Heart right ventricle (tissue), 16 donors: ENCODE measurements at regions of chr22 and their contacts with region 1.

Region 1: DNA sequence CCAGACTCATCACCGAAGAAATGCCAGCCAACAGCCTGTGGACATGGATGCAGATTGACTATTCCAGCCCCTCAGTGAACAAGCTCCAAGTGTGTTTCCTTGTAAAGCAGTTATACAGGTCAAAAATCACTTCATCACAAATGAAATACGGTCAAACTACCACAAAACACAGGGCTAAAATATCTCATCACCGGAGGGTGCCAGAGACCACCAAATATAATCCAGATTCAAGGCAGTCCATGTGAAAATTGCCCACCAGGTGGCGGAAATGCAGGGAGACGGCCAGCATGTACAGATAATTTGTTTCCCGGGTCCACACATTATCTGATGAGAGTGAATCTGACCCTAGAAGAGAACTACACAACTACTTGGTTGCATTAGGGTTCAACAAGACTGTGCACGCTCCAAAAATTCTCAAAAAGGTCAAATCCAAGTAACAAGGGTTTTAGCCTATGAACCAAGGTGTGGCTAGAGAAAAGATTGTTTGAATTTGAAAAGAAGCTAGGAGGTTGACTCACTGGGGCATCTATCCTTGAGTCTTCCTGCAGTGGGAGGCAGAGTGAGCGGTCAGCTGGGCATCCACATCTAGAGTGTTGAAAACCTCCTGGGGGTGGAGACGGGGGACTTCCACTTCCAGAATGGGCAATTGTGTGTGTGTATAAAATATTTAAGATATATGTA is 71.7 kb downstream of the IGLL5 start:
- DNase-seq: peak; percentile 45 to 81
- ATAC-seq: peak; percentile 52 to 87 (median 77)
- H3K4me3 ChIP-seq: no peak overlapping the region
- H3K27ac ChIP-seq: peak overlapping the region in 7 of 10 donors; percentile 54 to 77 (median 73)
- H3K4me1 ChIP-seq: peaks cover 0 to 21% (median 6%) of the 10 kb centered on the region in 9 donors
- H3K27me3 ChIP-seq: peaks cover 0 to 24% (median 15%) of the 10 kb centered on the region in 7 donors
- CTCF ChIP-seq: peak; percentile 86 to 99 (median 93)

Region 2: DNA sequence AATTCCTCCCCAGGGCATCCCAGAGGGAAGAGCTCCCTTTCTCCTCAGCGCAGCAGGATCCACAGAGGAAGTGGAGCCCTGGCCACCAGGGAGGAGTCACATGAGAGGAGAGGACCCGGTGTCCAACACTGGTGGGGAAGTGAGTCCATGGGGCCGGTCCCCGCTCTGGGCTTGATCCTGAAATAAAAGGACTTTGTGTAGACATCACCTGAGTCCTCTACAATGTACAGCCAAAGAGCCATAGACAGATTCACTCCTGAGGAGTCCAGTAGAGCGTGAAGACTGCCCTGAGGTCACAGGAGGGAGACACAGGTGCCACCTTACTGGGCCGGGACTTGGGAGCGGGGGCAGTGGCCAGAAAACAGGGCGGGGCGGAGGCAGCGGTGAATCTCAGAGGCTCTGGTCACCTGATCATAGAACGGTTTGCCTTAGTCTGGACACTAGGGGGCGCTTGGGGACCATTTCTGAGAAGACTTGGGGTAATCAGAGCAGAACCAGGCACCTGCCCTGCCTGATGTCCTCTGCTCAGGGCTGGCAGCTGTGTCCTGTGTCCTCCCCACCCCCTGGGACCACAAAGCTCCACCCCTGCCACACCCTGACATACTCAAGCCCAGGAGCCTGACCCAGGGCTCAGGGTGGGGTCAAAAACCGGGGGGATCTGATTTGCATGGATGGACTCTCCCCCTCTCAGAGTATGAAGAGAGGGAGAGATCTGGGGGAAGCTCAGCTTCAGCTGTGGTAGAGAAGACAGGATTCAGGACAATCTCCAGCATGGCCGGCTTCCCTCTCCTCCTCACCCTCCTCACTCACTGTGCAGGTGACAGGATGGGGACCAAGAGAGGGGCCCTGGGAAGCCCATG is 602.0 kb before region 1 on chr22:
- intact Hi-C with region 1: loop called in 1 of 10 experiments (anchors 10 kb)
- DNase-seq: peak; percentile 57 to 74
- ATAC-seq: peak; percentile 67 to 94 (median 82)
- H3K4me3 ChIP-seq: no peak overlapping the region
- H3K27ac ChIP-seq: no peak overlapping the region
- H3K4me1 ChIP-seq: no peaks in the 10 kb centered on the region
- H3K27me3 ChIP-seq: peaks cover 0 to 63% (median 37%) of the 10 kb centered on the region in 7 donors
- CTCF ChIP-seq: peak; percentile 31 to 71 (median 63)

Region 3: DNA sequence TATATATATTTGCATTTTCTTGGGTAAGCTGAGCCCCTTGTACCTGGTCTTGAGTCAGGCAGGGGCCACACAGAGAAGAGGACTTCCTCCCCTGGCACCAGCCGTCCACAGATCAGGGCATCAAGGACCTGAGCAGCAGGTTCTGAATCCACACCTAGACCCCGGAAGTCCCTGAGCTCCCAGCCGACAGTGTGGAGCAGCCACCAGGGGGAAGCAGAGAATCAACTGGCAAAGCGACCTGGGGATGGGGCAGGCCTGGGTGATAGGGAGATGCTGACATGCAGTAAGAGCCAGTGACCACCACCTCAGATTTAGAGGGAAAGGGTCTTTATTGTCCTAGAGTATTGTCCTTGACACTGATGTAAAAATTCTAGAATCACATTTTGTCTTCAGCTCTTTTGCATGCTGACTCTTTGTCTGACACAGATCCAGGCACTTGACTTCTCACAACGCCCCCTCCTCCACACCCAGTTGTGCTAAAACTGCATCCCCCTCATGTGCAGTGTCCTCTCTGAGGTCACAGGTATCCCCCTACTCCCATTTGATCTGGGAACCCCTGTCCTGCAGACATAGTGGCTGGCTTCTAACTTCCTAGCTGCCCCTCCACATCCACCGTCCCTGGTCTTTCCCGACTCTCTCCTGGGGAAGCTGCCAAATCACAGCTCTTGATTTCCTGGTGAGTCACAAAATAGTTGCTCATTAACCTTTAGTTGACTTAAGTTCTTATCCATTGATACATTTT is 205.6 kb before region 1 on chr22:
- intact Hi-C with region 1: loop called in 1 of 10 experiments (anchors 10 kb)
- DNase-seq: peak in 1 of 2 donors; percentile 31
- ATAC-seq: peak in 6 of 8 donors; percentile 36 to 51 (median 42)
- H3K4me3 ChIP-seq: no peak overlapping the region
- H3K27ac ChIP-seq: peak overlapping the region in 1 of 10 donors; percentile 68
- H3K4me1 ChIP-seq: peaks cover 0 to 23% (median 0%) of the 10 kb centered on the region in 9 donors
- H3K27me3 ChIP-seq: peaks cover 0 to 28% (median 3%) of the 10 kb centered on the region in 7 donors
- CTCF ChIP-seq: peak in 7 of 9 donors; percentile 49 to 77 (median 53)

Region 4: DNA sequence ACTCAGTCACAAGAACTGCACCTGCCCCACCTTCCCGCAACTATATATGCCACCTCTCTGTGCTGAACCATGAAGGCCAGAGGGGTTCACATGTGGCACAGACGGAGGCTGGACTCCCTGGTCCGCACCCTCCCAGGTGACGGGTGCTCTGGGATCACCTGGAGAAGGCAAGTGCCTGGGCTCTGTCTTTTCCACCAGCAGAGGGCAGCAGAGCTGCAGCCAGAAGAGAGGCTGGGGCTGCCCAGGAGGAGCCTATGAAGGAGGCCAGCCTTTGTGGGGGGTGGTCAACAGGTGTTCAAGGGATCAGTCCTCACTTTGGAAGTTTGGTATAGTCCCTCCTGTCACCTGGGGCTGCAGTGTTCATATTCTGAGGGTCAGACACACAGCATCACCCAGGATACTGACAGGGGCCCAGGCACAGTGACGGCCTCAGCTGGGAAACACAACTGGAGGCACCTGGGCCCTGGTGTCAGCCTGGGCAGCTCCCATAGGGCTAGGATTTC is 110.9 kb before region 1 on chr22:
- intact Hi-C with region 1: loop called in 7 of 10 experiments (anchors 2 to 10 kb)
- DNase-seq: peak; percentile 41 to 51
- ATAC-seq: peak in 7 of 8 donors; percentile 61 to 79 (median 65)
- H3K4me3 ChIP-seq: no peak overlapping the region
- H3K27ac ChIP-seq: no peak overlapping the region
- H3K4me1 ChIP-seq: no peaks in the 10 kb centered on the region
- H3K27me3 ChIP-seq: peaks cover 0 to 28% (median 22%) of the 10 kb centered on the region in 7 donors
- CTCF ChIP-seq: peak; percentile 70 to 96 (median 86)

Region 5: GRCh38 chr22:23069502-23070357 is 110.4 kb after region 1 on chr22:
- intact Hi-C with region 1: loop called in 1 of 10 experiments (anchors 5 kb)
- DNase-seq: peak; percentile 91 to 95
- ATAC-seq: peak; percentile 94 to 98 (median 96)
- H3K4me3 ChIP-seq: peak overlapping the region in 9 of 10 donors; percentile 37 to 85 (median 63)
- H3K27ac ChIP-seq: peak overlapping the region in 4 of 10 donors; percentile 15 to 59 (median 53)
- H3K4me1 ChIP-seq: peaks cover 0 to 42% (median 20%) of the 10 kb centered on the region in 9 donors
- H3K27me3 ChIP-seq: peaks cover 0 to 36% (median 0%) of the 10 kb centered on the region in 7 donors
- CTCF ChIP-seq: no peak

Region 6: GRCh38 chr22:23289851-23290724 is 330.8 kb after region 1 on chr22:
- intact Hi-C with region 1: loop called in 6 of 10 experiments (anchors 5 to 10 kb)
- DNase-seq: peak; percentile 35 to 62
- ATAC-seq: peak; percentile 27 to 73 (median 54)
- H3K4me3 ChIP-seq: no peak overlapping the region
- H3K27ac ChIP-seq: no peak overlapping the region
- H3K4me1 ChIP-seq: peaks cover 0 to 13% (median 5%) of the 10 kb centered on the region in 9 donors
- H3K27me3 ChIP-seq: no peaks in the 10 kb centered on the region
- CTCF ChIP-seq: peak; percentile 68 to 80 (median 73)

Region 7: GRCh38 chr22:23539135-23539838 is 580.0 kb after region 1 on chr22:
- intact Hi-C with region 1: loop called in 1 of 10 experiments (anchors 5 kb)
- DNase-seq: peak; percentile 69 to 78
- ATAC-seq: peak; percentile 92 to 98 (median 97)
- H3K4me3 ChIP-seq: peak overlapping the region in 2 of 10 donors; percentile 14 to 33
- H3K27ac ChIP-seq: peak overlapping the region in 1 of 10 donors; percentile 63
- H3K4me1 ChIP-seq: peaks cover 0 to 7% (median 0%) of the 10 kb centered on the region in 9 donors
- H3K27me3 ChIP-seq: peaks cover 0 to 3% (median 0%) of the 10 kb centered on the region in 7 donors
- CTCF ChIP-seq: peak; percentile 82 to 89 (median 86)